ENCODE measurements at regions of chr12 and their contacts with region 1.

Region 1: GRCh38 chr12:24778486-24779304 is 170.2 kb downstream of the BCAT1 start:
- DNase-seq: peak; percentile 61
- ATAC-seq: peak; percentile 67
- H3K4me3 ChIP-seq: no peak overlapping the region
- H3K4me3 Mint-ChIP-seq: no peak overlapping the region
- H3K27ac ChIP-seq: no peak overlapping the region
- H3K27ac Mint-ChIP-seq: no peak overlapping the region
- H3K4me1 ChIP-seq: no peaks in the 10 kb centered on the region
- H3K4me1 Mint-ChIP-seq: no peaks in the 10 kb centered on the region
- H3K27me3 ChIP-seq: no peaks in the 10 kb centered on the region
- H3K27me3 Mint-ChIP-seq: peaks cover 4% of the 10 kb centered on the region
- CTCF ChIP-seq: peak; percentile 70

Region 2: GRCh38 chr12:22856178-22856577 is 1922.5 kb before region 1 on chr12:
- CTCF ChIA-PET with region 1: no interaction called
- POLR2A ChIA-PET with region 1: no interaction called
- intact Hi-C with region 1: loop called (anchors 5 kb)
- DNase-seq: peak; percentile 9
- ATAC-seq: no peak
- H3K4me3 ChIP-seq: no peak overlapping the region
- H3K4me3 Mint-ChIP-seq: no peak overlapping the region
- H3K27ac ChIP-seq: no peak overlapping the region
- H3K27ac Mint-ChIP-seq: no peak overlapping the region
- H3K4me1 ChIP-seq: no peaks in the 10 kb centered on the region
- H3K4me1 Mint-ChIP-seq: no peaks in the 10 kb centered on the region
- H3K27me3 ChIP-seq: peaks cover 0 to 7% (median 0%) of the 10 kb centered on the region in 4 experiments
- H3K27me3 Mint-ChIP-seq: peaks cover 30% of the 10 kb centered on the region
- CTCF ChIP-seq: peak; percentile 60

Region 3: GRCh38 chr12:24109381-24110039 is 669.2 kb before region 1 on chr12:
- CTCF ChIA-PET with region 1: interaction called, 3 read pairs
- POLR2A ChIA-PET with region 1: no interaction called
- intact Hi-C with region 1: loop called (anchors 2 kb)
- DNase-seq: peak; percentile 32
- ATAC-seq: no peak
- H3K4me3 ChIP-seq: no peak overlapping the region
- H3K4me3 Mint-ChIP-seq: no peak overlapping the region
- H3K27ac ChIP-seq: no peak overlapping the region
- H3K27ac Mint-ChIP-seq: no peak overlapping the region
- H3K4me1 ChIP-seq: no peaks in the 10 kb centered on the region
- H3K4me1 Mint-ChIP-seq: peaks cover 5% of the 10 kb centered on the region
- H3K27me3 ChIP-seq: no peaks in the 10 kb centered on the region
- H3K27me3 Mint-ChIP-seq: no peaks in the 10 kb centered on the region
- CTCF ChIP-seq: peak; percentile 67

Region 4: GRCh38 chr12:24360907-24361306 is 417.8 kb before region 1 on chr12:
- CTCF ChIA-PET with region 1: interaction called, 51 read pairs
- POLR2A ChIA-PET with region 1: no interaction called
- intact Hi-C with region 1: loop called (anchors 1 kb)
- DNase-seq: peak; percentile 25
- ATAC-seq: peak; percentile 65
- H3K4me3 ChIP-seq: peak overlapping the region in 3 of 5 experiments; percentile 3 to 34 (median 33)
- H3K4me3 Mint-ChIP-seq: peak overlapping the region; percentile 85
- H3K27ac ChIP-seq: peak overlapping the region; percentile 15 to 58
- H3K27ac Mint-ChIP-seq: peak overlapping the region; percentile 83
- H3K4me1 ChIP-seq: peaks cover 15 to 29% of the 10 kb centered on the region in 2 donors
- H3K4me1 Mint-ChIP-seq: peaks cover 45% of the 10 kb centered on the region
- H3K27me3 ChIP-seq: no peaks in the 10 kb centered on the region
- H3K27me3 Mint-ChIP-seq: no peaks in the 10 kb centered on the region
- CTCF ChIP-seq: no peak

Region 5: DNA sequence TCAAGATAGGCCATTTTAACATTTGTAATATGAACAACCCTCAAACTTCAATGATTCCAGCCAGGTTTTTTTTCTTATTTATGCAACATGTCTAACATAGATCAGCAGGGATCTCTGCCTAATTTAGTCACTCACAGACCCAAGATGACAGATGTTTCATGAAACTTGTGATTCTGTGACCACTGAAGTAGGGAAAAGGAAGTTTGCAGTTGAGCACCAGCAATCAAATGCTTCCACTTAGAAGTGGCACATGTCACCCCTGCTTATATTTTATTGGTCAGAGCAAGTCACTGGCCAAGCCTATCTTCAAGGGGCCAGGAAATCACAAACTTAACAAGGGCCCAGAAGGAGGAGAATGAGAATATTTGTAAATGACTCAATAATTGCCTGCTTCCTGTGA is 19.6 kb after region 1 on chr12:
- CTCF ChIA-PET with region 1: interaction called, 14 read pairs
- POLR2A ChIA-PET with region 1: no interaction called
- intact Hi-C with region 1: no loop called
- DNase-seq: peak; percentile 72
- ATAC-seq: peak; percentile 83
- H3K4me3 ChIP-seq: no peak overlapping the region
- H3K4me3 Mint-ChIP-seq: peak overlapping the region; percentile 50
- H3K27ac ChIP-seq: peak overlapping the region; percentile 71 to 87
- H3K27ac Mint-ChIP-seq: peak overlapping the region; percentile 79
- H3K4me1 ChIP-seq: peaks cover 29 to 35% of the 10 kb centered on the region in 2 donors
- H3K4me1 Mint-ChIP-seq: peaks cover 41% of the 10 kb centered on the region
- H3K27me3 ChIP-seq: no peaks in the 10 kb centered on the region
- H3K27me3 Mint-ChIP-seq: no peaks in the 10 kb centered on the region
- CTCF ChIP-seq: no peak

Region 6: GRCh38 chr12:24838531-24838950 is 59.8 kb after region 1 on chr12:
- CTCF ChIA-PET with region 1: interaction called, 13 read pairs
- POLR2A ChIA-PET with region 1: no interaction called
- intact Hi-C with region 1: no loop called
- DNase-seq: peak; percentile 4
- ATAC-seq: no peak
- H3K4me3 ChIP-seq: no peak overlapping the region
- H3K4me3 Mint-ChIP-seq: no peak overlapping the region
- H3K27ac ChIP-seq: no peak overlapping the region
- H3K27ac Mint-ChIP-seq: no peak overlapping the region
- H3K4me1 ChIP-seq: peaks cover 0 to 13% of the 10 kb centered on the region in 2 donors
- H3K4me1 Mint-ChIP-seq: peaks cover 13% of the 10 kb centered on the region
- H3K27me3 ChIP-seq: no peaks in the 10 kb centered on the region
- H3K27me3 Mint-ChIP-seq: no peaks in the 10 kb centered on the region
- CTCF ChIP-seq: no peak